Heart right ventricle (tissue), 16 donors: ENCODE measurements at regions of chr5 and their contacts with region 1.

Region 1: DNA sequence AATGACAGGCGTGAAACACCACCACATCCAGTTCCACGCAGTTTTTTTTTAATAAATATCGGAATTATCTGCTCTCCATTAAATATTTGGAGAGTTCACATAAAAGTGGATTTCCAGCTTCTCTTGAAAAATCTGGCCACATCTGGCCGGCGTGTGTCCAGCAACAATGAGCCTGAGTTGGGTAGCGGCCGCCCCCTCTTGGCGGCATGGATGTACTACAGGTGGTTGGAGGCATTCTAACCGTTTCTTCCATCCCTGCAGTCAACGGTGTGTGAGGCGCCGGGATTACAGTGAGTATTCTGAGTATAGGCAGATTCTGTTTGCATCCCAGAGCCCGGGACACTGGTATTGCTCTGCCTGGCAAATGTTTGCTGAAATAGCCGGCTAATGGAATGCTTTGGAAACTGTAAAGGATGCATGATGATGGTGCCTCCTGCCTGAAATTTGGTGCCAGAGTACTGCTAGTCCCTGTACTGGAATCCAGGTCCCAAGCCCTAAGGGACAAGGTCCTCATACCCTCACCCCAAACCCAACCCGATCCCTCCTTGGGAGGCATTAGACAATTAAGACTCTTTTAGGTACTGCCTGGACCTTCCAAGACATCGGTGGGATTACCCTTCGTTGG is 13.6 kb upstream of the GM2A start:
- DNase-seq: peak; percentile 83 to 87
- ATAC-seq: peak; percentile 48 to 89 (median 72)
- H3K4me3 ChIP-seq: peak overlapping the region in 7 of 10 donors; percentile 8 to 41 (median 37)
- H3K27ac ChIP-seq: peak overlapping the region in 9 of 10 donors; percentile 69 to 93 (median 84)
- H3K4me1 ChIP-seq: peaks cover 9 to 41% (median 33%) of the 10 kb centered on the region in 9 donors
- H3K27me3 ChIP-seq: no peaks in the 10 kb centered on the region
- CTCF ChIP-seq: peak; percentile 79 to 95 (median 93)

Region 2: GRCh38 chr5:151051066-151051930 is 188.1 kb before region 1 on chr5:
- intact Hi-C with region 1: loop called in 4 of 10 experiments (anchors 5 to 10 kb)
- DNase-seq: peak; percentile 81 to 88
- ATAC-seq: peak; percentile 77 to 90 (median 84)
- H3K4me3 ChIP-seq: no peak overlapping the region
- H3K27ac ChIP-seq: peak overlapping the region in 6 of 10 donors; percentile 27 to 54 (median 40)
- H3K4me1 ChIP-seq: peaks cover 6 to 45% (median 15%) of the 10 kb centered on the region in 9 donors
- H3K27me3 ChIP-seq: no peaks in the 10 kb centered on the region
- CTCF ChIP-seq: peak; percentile 69 to 94 (median 88)

Region 3: DNA sequence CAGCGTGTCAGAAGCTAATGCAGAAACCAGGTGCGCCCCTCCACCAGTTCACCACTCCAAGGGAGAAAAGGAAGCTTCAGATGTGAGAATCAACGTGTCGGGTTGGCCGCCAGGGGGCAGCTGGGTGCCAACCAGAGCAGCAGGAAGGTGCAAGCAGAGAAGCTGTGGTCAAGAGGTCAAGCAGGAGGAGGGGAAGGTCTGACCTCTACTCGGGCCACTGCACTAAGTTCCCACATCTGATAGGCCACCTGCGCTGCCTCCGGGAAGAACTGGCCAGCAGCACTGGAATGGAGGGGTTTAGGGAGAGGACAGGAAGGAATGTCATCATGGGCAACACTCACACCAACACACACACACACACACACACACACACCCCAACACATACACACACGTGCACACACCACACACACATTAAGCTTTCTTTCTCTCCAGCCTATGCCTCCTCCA is 113.1 kb before region 1 on chr5:
- intact Hi-C with region 1: loop called in 9 of 10 experiments (anchors 1 to 5 kb)
- DNase-seq: peak; percentile 65 to 79
- ATAC-seq: peak; percentile 34 to 70 (median 60)
- H3K4me3 ChIP-seq: no peak overlapping the region
- H3K27ac ChIP-seq: peak overlapping the region in 2 of 10 donors; percentile 28 to 58
- H3K4me1 ChIP-seq: peaks cover 9 to 34% (median 16%) of the 10 kb centered on the region in 9 donors
- H3K27me3 ChIP-seq: no peaks in the 10 kb centered on the region
- CTCF ChIP-seq: peak; percentile 64 to 90 (median 84)

Region 4: GRCh38 chr5:151157426-151158286 is 81.7 kb before region 1 on chr5 and contains the start of gene ANXA6:
- intact Hi-C with region 1: loop called in 4 of 10 experiments (anchors 5 to 10 kb)
- DNase-seq: peak; percentile 89 to 92
- ATAC-seq: peak; percentile 98 to 99 (median 99)
- H3K4me3 ChIP-seq: peak within 1 kb of the TSS; percentile 58 to 95 (median 84)
- H3K27ac ChIP-seq: peak within 1 kb of the TSS; percentile 61 to 96 (median 89)
- H3K4me1 ChIP-seq: peaks cover 16 to 56% (median 48%) of the 10 kb centered on the region in 9 donors
- H3K27me3 ChIP-seq: no peaks in the 10 kb centered on the region
- CTCF ChIP-seq: no peak
- total RNA-seq, gene ANXA6: 182 to 275 (median 219) TPM

Region 5: GRCh38 chr5:151174612-151175101 is 64.7 kb before region 1 on chr5:
- intact Hi-C with region 1: loop called in 5 of 10 experiments (anchors 2 to 10 kb)
- DNase-seq: no peak
- ATAC-seq: peak in 7 of 8 donors; percentile 21 to 71 (median 49)
- H3K4me3 ChIP-seq: peak overlapping the region in 2 of 10 donors; percentile 2 to 16
- H3K27ac ChIP-seq: peak overlapping the region in 2 of 10 donors; percentile 13 to 22
- H3K4me1 ChIP-seq: peaks cover 0 to 12% (median 0%) of the 10 kb centered on the region in 9 donors
- H3K27me3 ChIP-seq: no peaks in the 10 kb centered on the region
- CTCF ChIP-seq: no peak

Region 6: GRCh38 chr5:151252762-151253604 is 13.6 kb after region 1 on chr5 and contains the start of gene GM2A:
- intact Hi-C with region 1: no loop called
- DNase-seq: peak; percentile 99 to 100
- ATAC-seq: peak; percentile 96 to 98 (median 98)
- H3K4me3 ChIP-seq: peak within 1 kb of the TSS; percentile 58 to 93 (median 80)
- H3K27ac ChIP-seq: peak within 1 kb of the TSS in 9 of 10 donors; percentile 75 to 92 (median 80)
- H3K4me1 ChIP-seq: peaks cover 0 to 55% (median 31%) of the 10 kb centered on the region in 9 donors
- H3K27me3 ChIP-seq: no peaks in the 10 kb centered on the region
- CTCF ChIP-seq: no peak
- total RNA-seq, gene GM2A: 30.5 to 47.1 (median 36.5) TPM